ENCODE measurements at regions of chr4 and their contacts with region 1.

Region 1: GRCh38 chr4:108030332-108030731 is 40.6 kb downstream of the HADH start:
- DNase-seq: peak; percentile 43 to 87 (median 73)
- ATAC-seq: peak; percentile 84
- H3K4me3 ChIP-seq: no peak overlapping the region
- H3K4me3 Mint-ChIP-seq: peak overlapping the region; percentile 60
- H3K27ac ChIP-seq: peak overlapping the region; percentile 24 to 55
- H3K27ac Mint-ChIP-seq: peak overlapping the region; percentile 92
- H3K4me1 ChIP-seq: peaks cover 63% of the 10 kb centered on the region
- H3K4me1 Mint-ChIP-seq: peaks cover 64% of the 10 kb centered on the region
- H3K27me3 ChIP-seq: no peaks in the 10 kb centered on the region
- H3K27me3 Mint-ChIP-seq: no peaks in the 10 kb centered on the region
- CTCF ChIP-seq: peak; percentile 75

Region 2: DNA sequence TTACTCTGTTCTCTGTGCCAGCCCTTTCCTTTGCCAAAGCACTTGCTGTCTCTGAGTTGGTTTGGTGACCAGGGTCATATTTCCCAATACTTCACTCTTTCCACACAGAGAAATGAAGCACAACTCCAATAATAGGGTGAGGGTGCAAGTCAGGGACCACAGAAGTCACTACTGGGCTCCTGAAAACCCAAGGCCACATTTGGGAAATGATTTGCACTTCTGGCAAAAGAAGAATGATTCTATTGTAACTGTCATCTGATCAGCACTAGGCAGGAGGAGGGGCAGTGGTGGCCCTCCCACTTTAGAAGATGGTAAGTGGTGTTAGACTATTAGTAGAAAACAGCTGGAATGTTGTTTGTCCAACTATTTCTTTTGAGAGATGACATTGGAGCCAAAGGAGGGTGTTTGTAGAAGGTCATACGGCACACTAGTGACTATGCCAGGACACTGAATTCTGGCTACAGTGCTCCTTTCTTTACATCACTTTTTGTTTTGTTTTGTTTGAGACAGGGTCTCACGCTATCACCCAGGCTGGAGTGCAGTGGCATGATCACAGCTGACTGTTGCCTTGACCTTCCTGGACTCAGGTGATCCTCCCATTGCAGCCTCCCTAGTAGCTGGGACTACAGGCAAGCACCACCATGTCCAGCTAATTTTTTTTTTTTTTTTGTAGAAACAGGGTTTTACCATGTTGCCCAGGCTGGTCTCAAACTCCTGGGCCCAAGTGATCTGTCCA is 51.4 kb before region 1 on chr4:
- CTCF ChIA-PET with region 1: no interaction called
- POLR2A ChIA-PET with region 1: no interaction called
- intact Hi-C with region 1: no loop called
- DNase-seq: no peak
- ATAC-seq: no peak
- H3K4me3 ChIP-seq: no peak overlapping the region
- H3K4me3 Mint-ChIP-seq: no peak overlapping the region
- H3K27ac ChIP-seq: no peak overlapping the region
- H3K27ac Mint-ChIP-seq: no peak overlapping the region
- H3K4me1 ChIP-seq: no peaks in the 10 kb centered on the region
- H3K4me1 Mint-ChIP-seq: peaks cover 6% of the 10 kb centered on the region
- H3K27me3 ChIP-seq: no peaks in the 10 kb centered on the region
- H3K27me3 Mint-ChIP-seq: no peaks in the 10 kb centered on the region
- CTCF ChIP-seq: no peak

Region 3: GRCh38 chr4:107989537-107990386 is 40.6 kb before region 1 on chr4 and contains the start of gene HADH:
- CTCF ChIA-PET with region 1: no interaction called
- POLR2A ChIA-PET with region 1: no interaction called
- intact Hi-C with region 1: loop called in 1 of 2 experiments (anchors 1 kb)
- DNase-seq: peak; percentile 87 to 97 (median 94)
- ATAC-seq: peak; percentile 99
- H3K4me3 ChIP-seq: peak within 1 kb of the TSS; percentile 65 to 75
- H3K4me3 Mint-ChIP-seq: peak within 1 kb of the TSS; percentile 96
- H3K27ac ChIP-seq: peak within 1 kb of the TSS; percentile 70 to 74
- H3K27ac Mint-ChIP-seq: peak within 1 kb of the TSS; percentile 95
- H3K4me1 ChIP-seq: peaks cover 28% of the 10 kb centered on the region
- H3K4me1 Mint-ChIP-seq: peaks cover 60% of the 10 kb centered on the region
- H3K27me3 ChIP-seq: no peaks in the 10 kb centered on the region
- H3K27me3 Mint-ChIP-seq: no peaks in the 10 kb centered on the region
- CTCF ChIP-seq: no peak
- total RNA-seq, gene HADH: 9.6 to 10.9 TPM

Region 4: DNA sequence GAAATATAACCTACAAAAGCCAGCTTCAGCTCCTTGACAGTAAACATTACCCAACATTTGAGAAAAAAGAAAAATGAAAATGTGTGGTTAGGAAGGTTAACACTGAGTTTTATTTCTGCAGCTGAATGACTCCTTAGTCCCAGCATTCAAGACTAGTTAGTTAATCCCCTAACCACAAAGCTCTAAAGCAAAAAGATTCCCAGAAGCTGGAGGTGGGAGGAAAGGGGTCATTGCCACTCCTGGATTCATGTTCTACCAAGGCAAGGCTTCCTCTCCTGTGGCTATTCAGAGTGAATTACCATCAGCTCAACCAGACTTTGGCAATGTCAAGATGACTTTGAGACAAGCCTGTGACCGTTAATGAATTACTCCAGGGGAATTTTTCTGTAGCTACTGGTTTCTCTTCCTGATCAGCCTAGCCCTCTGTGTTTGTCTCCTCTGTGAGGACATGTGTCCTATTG is 22.9 kb after region 1 on chr4:
- CTCF ChIA-PET with region 1: interaction called, 8 read pairs
- POLR2A ChIA-PET with region 1: interaction called, 11 read pairs
- intact Hi-C with region 1: loop called in 1 of 2 experiments (anchors 2 kb)
- DNase-seq: no peak
- ATAC-seq: no peak
- H3K4me3 ChIP-seq: no peak overlapping the region
- H3K4me3 Mint-ChIP-seq: peak overlapping the region; percentile 49
- H3K27ac ChIP-seq: peak overlapping the region; percentile 1 to 35
- H3K27ac Mint-ChIP-seq: peak overlapping the region; percentile 95
- H3K4me1 ChIP-seq: peaks cover 96% of the 10 kb centered on the region
- H3K4me1 Mint-ChIP-seq: peaks cover 91% of the 10 kb centered on the region
- H3K27me3 ChIP-seq: no peaks in the 10 kb centered on the region
- H3K27me3 Mint-ChIP-seq: no peaks in the 10 kb centered on the region
- CTCF ChIP-seq: no peak

Region 5: GRCh38 chr4:108080747-108081146 is 50.4 kb after region 1 on chr4:
- CTCF ChIA-PET with region 1: interaction called, 6 read pairs
- POLR2A ChIA-PET with region 1: interaction called, 4 read pairs
- intact Hi-C with region 1: loop called in 1 of 2 experiments (anchors 2 kb)
- DNase-seq: peak; percentile 23 to 86 (median 67)
- ATAC-seq: peak; percentile 85
- H3K4me3 ChIP-seq: peak overlapping the region; percentile 3 to 6
- H3K4me3 Mint-ChIP-seq: peak overlapping the region; percentile 72
- H3K27ac ChIP-seq: peak overlapping the region; percentile 39 to 60
- H3K27ac Mint-ChIP-seq: peak overlapping the region; percentile 99
- H3K4me1 ChIP-seq: peaks cover 75% of the 10 kb centered on the region
- H3K4me1 Mint-ChIP-seq: peaks cover 67% of the 10 kb centered on the region
- H3K27me3 ChIP-seq: no peaks in the 10 kb centered on the region
- H3K27me3 Mint-ChIP-seq: no peaks in the 10 kb centered on the region
- CTCF ChIP-seq: no peak

Region 6: GRCh38 chr4:108141213-108141950 is 111.0 kb after region 1 on chr4:
- CTCF ChIA-PET with region 1: interaction called, 10 read pairs
- POLR2A ChIA-PET with region 1: interaction called, 5 read pairs
- intact Hi-C with region 1: no loop called
- DNase-seq: peak in 3 of 9 experiments; percentile 33 to 45 (median 38)
- ATAC-seq: peak; percentile 6
- H3K4me3 ChIP-seq: peak overlapping the region in 1 of 2 experiments; percentile 10
- H3K4me3 Mint-ChIP-seq: peak overlapping the region; percentile 73
- H3K27ac ChIP-seq: peak overlapping the region; percentile 7 to 9
- H3K27ac Mint-ChIP-seq: peak overlapping the region; percentile 94
- H3K4me1 ChIP-seq: peaks cover 99% of the 10 kb centered on the region
- H3K4me1 Mint-ChIP-seq: peaks cover 90% of the 10 kb centered on the region
- H3K27me3 ChIP-seq: no peaks in the 10 kb centered on the region
- H3K27me3 Mint-ChIP-seq: no peaks in the 10 kb centered on the region
- CTCF ChIP-seq: no peak

Region 7: GRCh38 chr4:108345862-108346817 is 315.8 kb after region 1 on chr4:
- CTCF ChIA-PET with region 1: no interaction called
- POLR2A ChIA-PET with region 1: no interaction called
- intact Hi-C with region 1: loop called in 1 of 2 experiments (anchors 5 kb)
- DNase-seq: no peak
- ATAC-seq: no peak
- H3K4me3 ChIP-seq: no peak overlapping the region
- H3K4me3 Mint-ChIP-seq: no peak overlapping the region
- H3K27ac ChIP-seq: no peak overlapping the region
- H3K27ac Mint-ChIP-seq: peak overlapping the region; percentile 19
- H3K4me1 ChIP-seq: peaks cover 24% of the 10 kb centered on the region
- H3K4me1 Mint-ChIP-seq: peaks cover 46% of the 10 kb centered on the region
- H3K27me3 ChIP-seq: no peaks in the 10 kb centered on the region
- H3K27me3 Mint-ChIP-seq: no peaks in the 10 kb centered on the region
- CTCF ChIP-seq: no peak

Region 8: GRCh38 chr4:108560616-108561015 is 530.3 kb after region 1 on chr4:
- CTCF ChIA-PET with region 1: interaction called, 12 read pairs
- POLR2A ChIA-PET with region 1: no interaction called
- intact Hi-C with region 1: no loop called
- DNase-seq: no peak
- ATAC-seq: no peak
- H3K4me3 ChIP-seq: no peak overlapping the region
- H3K4me3 Mint-ChIP-seq: no peak overlapping the region
- H3K27ac ChIP-seq: no peak overlapping the region
- H3K27ac Mint-ChIP-seq: no peak overlapping the region
- H3K4me1 ChIP-seq: no peaks in the 10 kb centered on the region
- H3K4me1 Mint-ChIP-seq: peaks cover 8% of the 10 kb centered on the region
- H3K27me3 ChIP-seq: no peaks in the 10 kb centered on the region
- H3K27me3 Mint-ChIP-seq: no peaks in the 10 kb centered on the region
- CTCF ChIP-seq: no peak